ENCODE measurements at regions of chr4 and their contacts with region 1.

Region 1: DNA sequence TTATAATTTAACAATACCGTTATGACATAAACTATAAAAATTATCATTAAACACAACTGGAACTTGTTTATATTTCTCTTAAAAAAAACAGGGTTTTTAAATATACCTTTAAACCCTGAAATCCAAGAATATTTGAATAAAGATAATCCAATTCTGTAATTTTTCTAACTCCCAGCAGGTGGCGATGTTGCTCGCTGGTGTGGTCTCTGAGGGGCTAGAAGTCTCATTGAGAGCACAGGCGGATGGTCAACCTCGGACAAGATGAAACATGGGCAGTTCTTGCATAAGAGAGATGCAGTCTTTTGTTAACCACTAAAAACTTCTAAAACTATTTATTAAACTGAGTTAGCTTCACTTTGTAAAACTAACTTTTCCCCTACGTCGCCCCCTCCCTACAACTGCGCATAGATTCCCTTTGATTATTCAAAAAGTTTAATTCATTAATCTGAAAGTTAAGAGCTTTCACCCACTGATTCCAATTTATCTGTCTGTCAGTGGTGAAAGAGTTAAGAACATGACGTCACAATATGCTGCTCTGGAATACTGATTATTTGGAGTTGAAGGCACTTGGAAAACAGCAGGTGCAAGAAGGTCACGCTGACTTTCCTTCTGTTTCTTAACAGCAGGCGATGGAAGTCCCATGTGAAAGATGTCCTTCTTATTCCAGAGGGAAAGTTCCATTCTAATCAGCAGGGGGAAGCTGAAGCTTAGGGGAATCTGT is 29.5 kb downstream of the DMP1 start:
- DNase-seq: no peak

Region 2: GRCh38 chr4:87543835-87544461 is 135.7 kb before region 1 on chr4:
- intact Hi-C with region 1: loop called (anchors 5 kb)
- DNase-seq: no peak

Region 3: GRCh38 chr4:87758270-87758669 is 78.7 kb after region 1 on chr4:
- intact Hi-C with region 1: no loop called
- DNase-seq: no peak

Region 4: DNA sequence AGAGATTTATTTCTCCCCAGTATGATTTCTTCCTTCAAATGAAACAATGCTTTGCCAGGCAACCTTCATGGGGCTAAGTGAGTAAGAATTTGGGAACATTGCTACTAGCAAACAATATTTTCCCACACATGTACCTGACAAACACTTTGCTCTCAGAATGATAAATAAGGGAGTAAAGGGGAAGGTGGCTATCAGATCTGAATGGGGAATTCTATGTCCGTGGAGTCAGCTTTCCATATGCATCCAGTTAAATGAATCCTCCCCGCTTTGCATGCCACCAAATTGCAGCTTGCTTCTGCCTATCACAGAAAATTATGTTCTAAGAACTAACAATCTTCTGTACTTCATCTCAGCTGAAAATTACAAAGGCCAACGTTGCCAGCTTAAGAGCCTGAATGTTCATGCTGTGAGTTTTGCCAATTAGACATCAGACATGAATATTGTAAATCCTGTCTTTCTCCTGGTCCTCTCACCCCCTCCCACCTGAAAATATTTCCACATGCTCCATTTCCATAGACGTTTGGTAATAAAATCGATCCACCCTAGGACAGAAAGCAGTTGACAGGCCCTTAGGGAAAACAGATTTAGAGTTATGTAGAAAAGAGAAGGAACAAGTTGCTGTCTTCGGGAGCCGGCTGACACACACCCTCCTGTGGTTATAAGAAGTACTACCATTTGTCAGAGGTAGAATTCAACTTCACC is 159.4 kb after region 1 on chr4:
- intact Hi-C with region 1: loop called (anchors 1 kb)
- DNase-seq: no peak

Region 5: DNA sequence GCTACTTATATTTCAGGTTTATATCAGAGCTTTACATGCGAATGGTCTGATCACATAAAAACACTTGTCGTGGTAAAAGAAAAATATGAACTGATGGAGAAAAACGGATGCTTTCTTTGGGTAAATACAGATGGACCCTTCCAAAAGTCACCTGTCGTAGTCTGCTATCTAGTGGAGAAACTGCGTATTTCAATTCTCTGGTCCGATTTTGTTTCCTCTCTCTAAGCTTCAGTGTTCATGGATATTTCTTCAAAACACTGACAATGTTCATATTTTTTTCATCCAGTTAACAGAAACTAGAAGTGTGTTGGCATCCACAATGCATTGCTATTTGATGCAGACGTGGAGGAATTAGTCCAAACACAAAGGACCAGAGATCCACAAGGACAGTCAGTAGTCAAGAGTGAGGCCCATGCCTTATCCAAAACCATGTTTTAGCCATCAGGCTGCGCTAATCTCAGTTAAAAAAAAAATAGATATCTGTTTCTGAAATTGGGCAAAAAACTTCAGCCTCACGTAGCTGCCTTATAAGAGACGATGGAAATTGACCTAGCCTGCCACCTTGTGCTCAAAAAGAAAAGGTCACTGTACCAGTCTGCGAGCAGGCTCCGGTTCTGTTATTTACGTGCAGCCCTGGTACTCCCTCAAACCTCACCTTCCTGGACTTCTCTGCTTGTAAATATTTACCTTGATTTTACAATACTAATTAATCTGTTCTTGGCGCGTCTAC is 169.2 kb after region 1 on chr4:
- intact Hi-C with region 1: loop called (anchors 2 kb)
- DNase-seq: no peak

Region 6: GRCh38 chr4:87949961-87950360 is 270.4 kb after region 1 on chr4:
- intact Hi-C with region 1: no loop called
- DNase-seq: no peak

Region 7: GRCh38 chr4:87973283-87974169 is 293.9 kb after region 1 on chr4:
- intact Hi-C with region 1: loop called (anchors 10 kb)
- DNase-seq: no peak

Region 8: DNA sequence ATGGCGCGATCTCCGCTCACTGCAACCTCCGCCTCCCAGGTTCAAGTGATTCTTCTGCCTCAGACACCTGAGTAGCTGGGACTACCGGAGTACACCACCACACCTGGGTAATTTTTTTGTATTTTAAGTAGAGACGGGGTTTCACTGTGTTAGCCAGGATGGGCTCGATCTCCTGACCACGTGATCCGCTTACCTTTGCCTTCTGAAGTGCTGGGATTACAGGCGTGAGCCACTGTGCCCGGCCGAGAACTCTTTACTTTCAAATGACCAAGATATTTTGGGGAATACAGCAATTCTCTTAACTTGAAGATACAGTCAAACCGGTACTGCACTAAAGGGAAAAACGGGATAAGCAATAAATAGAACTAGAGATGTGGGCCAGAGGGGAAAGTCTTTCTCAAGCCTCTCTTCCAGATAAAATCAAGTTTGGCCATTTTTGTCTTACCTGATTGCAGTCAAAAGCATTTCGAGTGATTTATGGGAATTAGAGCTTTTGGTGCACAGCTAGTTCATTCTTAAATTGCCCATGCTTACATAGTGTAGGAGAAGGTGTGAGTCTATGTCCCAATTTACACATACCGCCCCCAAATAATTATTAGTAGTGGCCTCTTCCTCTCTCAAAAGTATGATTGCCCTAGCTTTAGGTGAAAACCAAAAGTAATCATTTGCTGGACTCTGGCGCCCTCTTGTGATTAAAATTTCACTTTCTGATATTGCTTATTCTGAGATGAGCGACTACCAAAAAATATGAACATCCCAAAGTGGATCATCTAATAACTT is 532.1 kb after region 1 on chr4:
- intact Hi-C with region 1: loop called (anchors 10 kb)
- DNase-seq: no peak